Gastrocnemius medialis (tissue), 4 donors: ENCODE measurements at regions of chr1 and their contacts with region 1.

Region 1: GRCh38 chr1:6784560-6785317 is 515 bp upstream of the CAMTA1 start:
- DNase-seq: peak; percentile 100
- ATAC-seq: peak; percentile 88 to 89
- H3K4me3 ChIP-seq: peak overlapping the region; percentile 88 to 97 (median 94)
- H3K27ac ChIP-seq: peak overlapping the region; percentile 98 to 100 (median 98)
- H3K4me1 ChIP-seq: peaks cover 27 to 32% of the 10 kb centered on the region in 2 donors
- H3K27me3 ChIP-seq: no peaks in the 10 kb centered on the region
- CTCF ChIP-seq: peak in 1 of 5 experiments; percentile 20
- POLR2A ChIP-seq: peak; percentile 95

Region 2: DNA sequence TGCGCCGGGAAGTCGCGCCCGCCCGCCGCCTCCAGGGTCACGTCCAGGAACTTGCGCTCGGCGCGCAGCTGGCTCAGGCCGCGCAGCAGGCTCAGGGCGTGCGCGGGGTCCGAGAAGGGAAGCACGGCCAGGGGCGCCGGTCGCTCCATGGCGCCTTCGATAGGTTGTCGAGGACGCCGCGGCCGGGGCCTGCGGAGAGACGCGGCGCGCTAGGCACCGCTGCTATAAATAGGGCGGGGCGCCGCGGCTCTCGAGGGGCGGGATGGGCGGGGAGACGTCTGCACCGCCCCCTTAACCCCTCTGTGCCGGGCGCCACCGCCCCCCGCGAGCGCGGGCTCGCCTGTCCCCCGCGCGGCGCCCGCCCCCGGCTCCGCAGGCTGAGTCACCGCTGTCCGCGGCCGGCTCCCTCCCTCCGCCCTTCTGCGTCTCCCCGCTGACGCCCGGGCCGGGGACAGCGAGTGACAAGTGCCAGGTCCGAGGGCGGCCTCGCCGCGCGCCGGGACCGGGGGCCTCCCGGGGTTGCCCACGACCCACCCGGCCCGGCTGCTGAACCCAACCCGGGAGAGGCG is 182.0 kb before region 1 on chr1 and contains the start of gene KLHL21:
- in situ Hi-C with region 1: no loop called
- intact Hi-C with region 1: loop called (anchors 5 kb)
- DNase-seq: peak; percentile 89 to 93
- ATAC-seq: peak; percentile 32 to 38
- H3K4me3 ChIP-seq: peak within 1 kb of the TSS; percentile 76 to 92 (median 90)
- H3K27ac ChIP-seq: peak within 1 kb of the TSS; percentile 98 to 100 (median 100)
- H3K4me1 ChIP-seq: peaks cover 42 to 50% of the 10 kb centered on the region in 2 donors
- H3K27me3 ChIP-seq: no peaks in the 10 kb centered on the region
- CTCF ChIP-seq: no peak
- POLR2A ChIP-seq: peak; percentile 94 to 98
- total RNA-seq, gene KLHL21: 176 to 481 (median 267) TPM

Region 3: DNA sequence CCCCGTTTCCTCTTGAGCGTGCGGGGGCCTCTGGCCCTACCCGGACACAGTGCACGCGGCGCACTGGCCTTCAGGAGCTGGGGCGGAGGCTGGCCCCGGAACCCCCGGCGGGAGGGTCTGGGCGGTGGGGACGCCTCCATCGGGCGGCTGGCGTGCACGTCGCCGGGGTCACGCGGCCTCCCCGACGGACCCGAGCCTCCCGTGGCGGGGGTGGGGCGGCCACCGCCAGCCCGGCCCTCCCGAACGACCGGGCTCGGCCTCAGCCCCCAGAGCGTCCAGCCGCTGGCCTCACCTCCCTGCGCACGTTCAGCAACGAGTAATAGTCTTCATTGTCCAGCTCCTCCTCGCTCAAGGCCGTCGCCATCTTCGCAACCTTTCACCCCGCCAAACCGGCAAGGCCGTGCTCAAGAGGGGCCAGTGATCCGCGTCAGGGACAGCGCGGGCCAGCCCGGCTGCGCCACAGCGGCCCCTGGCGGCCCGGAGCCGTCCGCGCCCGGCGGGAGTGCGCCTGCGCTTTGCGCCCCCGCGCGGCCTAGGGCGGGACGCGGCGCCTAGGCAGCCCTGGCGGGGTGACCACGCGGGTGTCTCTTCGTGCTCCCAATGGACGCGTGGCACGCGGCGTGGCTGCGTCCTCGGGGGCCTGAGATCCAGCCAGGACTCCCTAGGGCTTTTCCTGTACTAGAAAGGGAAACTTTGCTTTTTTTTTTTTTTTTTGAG is 83.1 kb before region 1 on chr1 and contains the start of gene DNAJC11:
- in situ Hi-C with region 1: no loop called
- intact Hi-C with region 1: loop called (anchors 2 kb)
- DNase-seq: peak; percentile 77 to 87
- ATAC-seq: peak; percentile 96 to 97
- H3K4me3 ChIP-seq: peak within 1 kb of the TSS; percentile 91 to 99 (median 96)
- H3K27ac ChIP-seq: peak within 1 kb of the TSS; percentile 80 to 93 (median 88)
- H3K4me1 ChIP-seq: peaks cover 22 to 32% of the 10 kb centered on the region in 2 donors
- H3K27me3 ChIP-seq: no peaks in the 10 kb centered on the region
- CTCF ChIP-seq: peak; percentile 64 to 100 (median 99)
- POLR2A ChIP-seq: peak in 1 of 2 donors; percentile 44
- total RNA-seq, gene DNAJC11: 23.3 to 40.7 (median 30.8) TPM

Region 4: DNA sequence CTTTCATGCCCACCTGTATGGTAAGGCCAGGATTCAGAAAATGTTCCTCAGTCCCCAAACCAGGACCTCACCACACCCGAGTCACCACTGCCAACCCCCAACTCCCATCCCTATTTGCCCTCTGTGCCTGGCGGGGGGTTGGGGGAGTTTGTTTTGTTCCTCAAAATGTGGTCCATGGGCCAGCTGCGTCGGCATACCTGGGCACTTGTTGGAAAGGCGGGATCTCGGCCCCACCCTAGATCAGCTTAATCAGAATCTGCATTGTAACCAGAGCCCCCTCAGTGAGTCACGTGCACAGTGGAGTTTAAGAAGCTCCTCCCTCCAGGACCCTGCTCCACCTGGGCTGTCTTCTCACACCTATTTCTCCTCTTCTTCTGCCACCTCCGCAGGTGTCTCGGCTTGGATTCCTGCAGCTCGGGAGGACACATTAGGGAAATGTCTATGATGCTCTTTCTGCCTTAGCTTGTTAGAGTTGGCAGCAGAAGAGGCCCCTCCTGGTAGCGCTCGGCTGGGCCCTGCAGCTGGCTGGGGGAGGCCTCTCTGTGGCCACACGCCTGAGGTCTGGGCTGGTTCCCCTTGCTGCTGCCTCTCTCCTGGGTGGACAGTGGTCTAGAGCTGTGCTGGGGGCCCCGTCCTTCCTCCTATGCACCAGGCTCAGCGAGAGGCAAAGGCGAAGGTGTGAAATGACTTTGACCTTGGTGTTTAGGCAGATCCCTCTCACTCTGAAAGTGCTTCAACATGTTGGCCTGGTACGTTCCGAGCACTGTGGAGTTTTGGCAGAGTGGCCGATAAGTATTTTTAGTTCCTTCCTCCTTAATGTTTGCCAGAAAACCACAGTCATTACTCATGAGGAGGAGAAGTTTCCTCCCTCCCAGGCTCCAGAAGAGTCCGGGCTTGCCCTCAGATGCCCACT is 41.3 kb before region 1 on chr1:
- in situ Hi-C with region 1: no loop called
- intact Hi-C with region 1: loop called (anchors 1 kb)
- DNase-seq: peak; percentile 44 to 68
- ATAC-seq: peak; percentile 99
- H3K4me3 ChIP-seq: peak overlapping the region in 2 of 4 donors; percentile 15 to 20
- H3K27ac ChIP-seq: peak overlapping the region; percentile 55 to 87 (median 82)
- H3K4me1 ChIP-seq: peaks cover 11% of the 10 kb centered on the region in 2 donors
- H3K27me3 ChIP-seq: no peaks in the 10 kb centered on the region
- CTCF ChIP-seq: no peak
- POLR2A ChIP-seq: no peak